ENCODE measurements at regions of chr3 and their contacts with region 1.

Region 1: GRCh38 chr3:113051302-113051711 is 60.5 kb downstream of the GTPBP8 start:
- DNase-seq: peak; percentile 71
- ATAC-seq: peak; percentile 96
- H3K4me3 ChIP-seq: no peak overlapping the region
- H3K27ac ChIP-seq: no peak overlapping the region
- H3K4me1 ChIP-seq: peaks cover 3 to 8% of the 10 kb centered on the region in 2 experiments; a peak in 2 of 4 replicates
- H3K27me3 ChIP-seq: no peaks in the 10 kb centered on the region
- CTCF ChIP-seq: peak; percentile 79 to 95 (median 91)
- POLR2A ChIP-seq: no peak
- RAD21 ChIP-seq: peak; percentile 96

Region 2: DNA sequence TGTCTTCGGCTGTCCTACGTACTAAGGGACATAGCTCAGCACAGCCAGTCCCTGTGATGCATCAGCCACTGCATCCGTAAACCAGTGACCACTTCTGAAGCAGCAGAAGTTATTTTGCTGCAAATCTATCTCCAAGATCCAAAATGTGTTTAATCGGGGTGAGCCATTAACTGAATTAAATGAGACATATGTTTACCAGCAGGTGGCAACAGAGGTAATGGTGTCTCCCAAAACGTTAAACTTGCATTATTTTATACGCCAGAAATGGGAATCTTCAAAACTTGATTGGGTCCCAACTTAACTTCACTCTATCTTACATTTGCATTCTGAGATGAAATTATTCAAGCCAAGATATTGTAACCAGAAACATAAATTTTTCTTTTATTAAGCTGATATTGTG is 84.8 kb after region 1 on chr3:
- CTCF ChIA-PET with region 1: no interaction called
- POLR2A ChIA-PET with region 1: no interaction called
- RAD21 ChIA-PET with region 1: no interaction called
- intact Hi-C with region 1: loop called (anchors 5 kb)
- DNase-seq: peak; percentile 16
- ATAC-seq: peak; percentile 64
- H3K4me3 ChIP-seq: no peak overlapping the region
- H3K27ac ChIP-seq: no peak overlapping the region
- H3K4me1 ChIP-seq: no peaks in the 10 kb centered on the region
- H3K27me3 ChIP-seq: no peaks in the 10 kb centered on the region
- CTCF ChIP-seq: peak; percentile 45 to 62 (median 55); a peak in 5 of 6 replicates
- POLR2A ChIP-seq: no peak
- RAD21 ChIP-seq: peak; percentile 68